CD4-positive, alpha-beta T cell (primary cell): ENCODE measurements at regions of chr19 and their contacts with region 1.

Region 1: DNA sequence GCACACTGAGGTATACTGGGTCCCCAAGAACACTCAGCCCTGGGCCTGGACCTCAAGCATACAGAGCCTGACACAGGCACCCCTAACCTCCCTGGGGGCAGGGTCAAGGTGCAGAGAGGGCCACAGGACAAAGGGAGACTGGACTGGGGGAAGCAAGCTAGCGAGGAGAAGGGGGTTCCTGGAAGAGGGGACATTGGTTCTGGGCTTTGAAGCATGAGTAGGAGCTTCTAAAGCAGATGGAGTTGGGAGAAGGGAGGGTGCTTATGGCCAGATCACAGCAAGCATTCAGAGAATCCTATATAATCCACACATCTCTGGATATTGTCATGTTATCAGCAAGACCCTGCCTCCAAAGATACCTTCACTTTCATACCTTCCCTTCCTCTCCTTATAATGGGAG is 3.2 kb downstream of the CIB3 start:
- DNase-seq: no peak
- ATAC-seq: no peak
- H3K4me3 ChIP-seq: no peak overlapping the region
- H3K4me3 Mint-ChIP-seq: no peak overlapping the region
- H3K27ac ChIP-seq: no peak overlapping the region
- H3K27ac Mint-ChIP-seq: no peak overlapping the region
- H3K4me1 ChIP-seq: peaks cover 5% of the 10 kb centered on the region
- H3K4me1 Mint-ChIP-seq: no peaks in the 10 kb centered on the region
- H3K27me3 ChIP-seq: no peaks in the 10 kb centered on the region
- H3K27me3 Mint-ChIP-seq: no peaks in the 10 kb centered on the region
- CTCF ChIP-seq: no peak

Region 2: GRCh38 chr19:16125737-16126495 is 44.2 kb before region 1 on chr19:
- CTCF ChIA-PET with region 1: no interaction called
- POLR2A ChIA-PET with region 1: no interaction called
- intact Hi-C with region 1: loop called in 1 of 2 experiments (anchors 5 kb)
- DNase-seq: no peak
- ATAC-seq: no peak
- H3K4me3 ChIP-seq: no peak overlapping the region
- H3K4me3 Mint-ChIP-seq: no peak overlapping the region
- H3K27ac ChIP-seq: no peak overlapping the region
- H3K27ac Mint-ChIP-seq: no peak overlapping the region
- H3K4me1 ChIP-seq: peaks cover 3% of the 10 kb centered on the region
- H3K4me1 Mint-ChIP-seq: no peaks in the 10 kb centered on the region
- H3K27me3 ChIP-seq: no peaks in the 10 kb centered on the region
- H3K27me3 Mint-ChIP-seq: no peaks in the 10 kb centered on the region
- CTCF ChIP-seq: no peak